ENCODE measurements at regions of chr16 and their contacts with region 1.

Region 1: GRCh38 chr16:52912565-52913173 is 140.0 kb downstream of the CHD9NB start:
- DNase-seq: peak; percentile 74 to 75
- H3K4me3 ChIP-seq: no peak overlapping the region
- H3K4me3 Mint-ChIP-seq: no peak overlapping the region
- H3K27ac Mint-ChIP-seq: no peak overlapping the region
- H3K4me1 ChIP-seq: no peaks in the 10 kb centered on the region
- H3K4me1 Mint-ChIP-seq: no peaks in the 10 kb centered on the region
- H3K27me3 ChIP-seq: no peaks in the 10 kb centered on the region
- H3K27me3 Mint-ChIP-seq: peaks cover 8% of the 10 kb centered on the region
- CTCF ChIP-seq: peak; percentile 80 to 94

Region 2: GRCh38 chr16:51898872-51899271 is 1013.8 kb before region 1 on chr16:
- CTCF ChIA-PET with region 1: no interaction called
- POLR2A ChIA-PET with region 1: no interaction called
- intact Hi-C with region 1: no loop called
- DNase-seq: no peak
- H3K4me3 ChIP-seq: no peak overlapping the region
- H3K4me3 Mint-ChIP-seq: no peak overlapping the region
- H3K27ac Mint-ChIP-seq: no peak overlapping the region
- H3K4me1 ChIP-seq: no peaks in the 10 kb centered on the region
- H3K4me1 Mint-ChIP-seq: no peaks in the 10 kb centered on the region
- H3K27me3 ChIP-seq: no peaks in the 10 kb centered on the region
- H3K27me3 Mint-ChIP-seq: peaks cover 4% of the 10 kb centered on the region
- CTCF ChIP-seq: no peak

Region 3: DNA sequence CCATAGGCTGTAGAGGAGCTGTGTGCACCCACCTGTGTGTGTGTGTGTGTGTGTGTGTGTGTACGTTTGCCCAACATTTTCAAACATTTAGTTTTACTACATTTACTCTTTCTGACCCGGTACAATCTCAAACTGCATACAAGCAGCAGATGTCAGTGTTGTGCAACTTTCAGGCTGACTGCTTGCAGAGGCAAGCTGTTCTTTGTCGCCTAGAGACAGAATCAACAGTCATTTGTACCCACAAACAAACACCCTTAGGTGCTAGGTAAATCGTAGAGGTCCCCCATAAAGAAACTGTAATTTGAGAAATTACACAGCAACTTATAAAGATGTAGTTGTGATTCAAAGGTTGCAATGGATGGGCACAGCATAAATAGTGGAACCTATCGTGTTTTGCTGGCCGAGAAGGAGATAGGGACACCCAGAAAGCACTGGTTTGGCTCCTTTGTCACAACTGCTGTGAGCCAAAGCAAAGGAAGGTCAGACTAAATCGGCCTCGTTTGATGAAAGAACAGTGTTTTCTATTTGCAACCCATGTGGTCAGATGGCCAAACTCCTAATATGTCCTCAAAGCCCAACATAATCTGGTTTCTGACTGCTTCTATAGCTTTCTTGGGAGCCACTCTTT is 844.1 kb before region 1 on chr16:
- CTCF ChIA-PET with region 1: interaction called, 6 read pairs
- POLR2A ChIA-PET with region 1: no interaction called
- intact Hi-C with region 1: loop called (anchors 1 kb)
- DNase-seq: peak; percentile 44 to 46
- H3K4me3 ChIP-seq: no peak overlapping the region
- H3K4me3 Mint-ChIP-seq: no peak overlapping the region
- H3K27ac Mint-ChIP-seq: no peak overlapping the region
- H3K4me1 ChIP-seq: no peaks in the 10 kb centered on the region
- H3K4me1 Mint-ChIP-seq: no peaks in the 10 kb centered on the region
- H3K27me3 ChIP-seq: no peaks in the 10 kb centered on the region
- H3K27me3 Mint-ChIP-seq: peaks cover 5% of the 10 kb centered on the region
- CTCF ChIP-seq: peak in 1 of 2 experiments; percentile 49

Region 4: DNA sequence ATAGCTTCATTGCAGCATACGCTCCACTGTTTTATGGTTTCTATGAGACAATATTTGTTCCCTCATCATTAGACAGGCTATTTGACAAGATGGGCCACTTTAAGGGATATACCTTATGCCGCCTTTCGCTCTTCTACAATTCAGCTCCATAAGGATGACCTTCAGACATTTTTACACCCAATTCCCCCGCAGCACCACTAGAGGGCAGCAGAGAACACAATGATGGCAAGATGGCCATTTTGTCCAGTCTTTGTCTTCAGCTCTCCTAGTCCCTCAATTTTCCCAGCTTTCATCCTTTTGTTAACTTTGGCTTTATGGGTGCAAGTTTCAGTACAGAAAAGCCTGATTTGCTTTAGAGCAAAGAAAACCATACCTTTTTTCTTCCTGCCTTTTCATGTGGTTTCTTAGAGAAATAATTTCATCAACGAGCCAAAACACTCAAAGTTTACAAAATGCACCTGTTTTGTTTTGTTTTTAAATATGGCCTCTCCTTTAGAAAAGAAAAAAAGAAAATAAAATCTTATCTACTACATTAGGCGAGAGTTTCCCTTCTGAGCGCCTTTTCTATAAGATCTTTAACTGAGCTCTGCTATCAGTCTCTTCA is 721.0 kb before region 1 on chr16:
- CTCF ChIA-PET with region 1: interaction called, 12 read pairs
- POLR2A ChIA-PET with region 1: no interaction called
- intact Hi-C with region 1: loop called (anchors 1 kb)
- DNase-seq: peak; percentile 68 to 77
- H3K4me3 ChIP-seq: no peak overlapping the region
- H3K4me3 Mint-ChIP-seq: no peak overlapping the region
- H3K27ac Mint-ChIP-seq: no peak overlapping the region
- H3K4me1 ChIP-seq: no peaks in the 10 kb centered on the region
- H3K4me1 Mint-ChIP-seq: no peaks in the 10 kb centered on the region
- H3K27me3 ChIP-seq: no peaks in the 10 kb centered on the region
- H3K27me3 Mint-ChIP-seq: peaks cover 4% of the 10 kb centered on the region
- CTCF ChIP-seq: peak; percentile 94 to 95

Region 5: DNA sequence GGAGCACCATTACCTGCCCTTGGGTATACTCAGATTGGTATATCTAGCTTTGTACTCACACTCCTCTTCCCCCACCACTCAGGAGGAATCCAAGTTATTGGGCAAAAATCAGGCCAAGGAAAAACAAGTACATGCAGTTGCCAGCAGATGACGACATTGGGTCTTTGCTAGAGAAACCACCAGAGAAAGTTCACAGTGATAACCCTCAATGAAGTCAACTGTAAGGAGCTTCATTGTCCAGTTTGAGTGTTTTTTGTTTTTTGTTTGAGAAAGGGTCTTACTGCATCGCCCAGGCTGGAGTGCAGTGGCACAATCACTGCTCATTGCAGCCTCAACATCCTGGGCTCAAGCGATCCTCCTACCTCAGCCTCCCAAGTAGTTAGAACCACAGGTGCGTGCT is 331.1 kb before region 1 on chr16:
- CTCF ChIA-PET with region 1: interaction called, 3 read pairs
- POLR2A ChIA-PET with region 1: no interaction called
- intact Hi-C with region 1: loop called (anchors 1 kb)
- DNase-seq: peak in 1 of 2 experiments; percentile 41
- H3K4me3 ChIP-seq: no peak overlapping the region
- H3K4me3 Mint-ChIP-seq: no peak overlapping the region
- H3K27ac Mint-ChIP-seq: no peak overlapping the region
- H3K4me1 ChIP-seq: peaks cover 10% of the 10 kb centered on the region
- H3K4me1 Mint-ChIP-seq: peaks cover 13% of the 10 kb centered on the region
- H3K27me3 ChIP-seq: no peaks in the 10 kb centered on the region
- H3K27me3 Mint-ChIP-seq: no peaks in the 10 kb centered on the region
- CTCF ChIP-seq: peak; percentile 57 to 80

Region 6: GRCh38 chr16:52657924-52658323 is 254.7 kb before region 1 on chr16:
- CTCF ChIA-PET with region 1: no interaction called
- POLR2A ChIA-PET with region 1: no interaction called
- intact Hi-C with region 1: no loop called
- DNase-seq: no peak
- H3K4me3 ChIP-seq: no peak overlapping the region
- H3K4me3 Mint-ChIP-seq: no peak overlapping the region
- H3K27ac Mint-ChIP-seq: no peak overlapping the region
- H3K4me1 ChIP-seq: no peaks in the 10 kb centered on the region
- H3K4me1 Mint-ChIP-seq: no peaks in the 10 kb centered on the region
- H3K27me3 ChIP-seq: no peaks in the 10 kb centered on the region
- H3K27me3 Mint-ChIP-seq: peaks cover under 1% of the 10 kb centered on the region
- CTCF ChIP-seq: no peak

Measured in Caco-2 (cell line).